ENCODE measurements at regions of chr1 and their contacts with region 1.

Region 1: GRCh38 chr1:201149400-201149799 is 4.9 kb downstream of the TMEM9 start:
- DNase-seq: peak; percentile 17
- ATAC-seq: no peak
- H3K4me3 Mint-ChIP-seq: no peak overlapping the region
- H3K27ac Mint-ChIP-seq: no peak overlapping the region
- H3K4me1 Mint-ChIP-seq: peaks cover 12% of the 10 kb centered on the region
- H3K27me3 Mint-ChIP-seq: no peaks in the 10 kb centered on the region
- CTCF ChIP-seq: peak; percentile 51

Region 2: DNA sequence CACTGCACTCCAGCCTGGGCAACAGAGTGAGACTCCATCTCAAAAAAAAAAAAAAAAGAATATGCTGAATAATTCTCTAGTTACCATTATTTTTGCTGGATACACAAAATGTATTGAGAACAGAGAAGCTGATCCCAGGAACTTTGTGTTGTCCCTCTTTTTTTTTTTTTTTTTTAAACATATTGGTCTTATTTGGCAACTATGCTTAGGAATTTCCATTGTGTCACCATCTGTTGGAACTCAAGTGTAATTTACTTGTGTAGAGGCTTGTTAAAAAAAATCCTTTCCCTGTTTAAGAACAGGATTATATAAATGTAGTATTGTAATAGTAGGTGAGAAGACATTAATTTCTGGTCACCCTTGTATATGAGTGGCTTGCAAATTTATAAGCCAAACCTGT is 382.1 kb before region 1 on chr1:
- CTCF ChIA-PET with region 1: no interaction called
- POLR2A ChIA-PET with region 1: no interaction called
- intact Hi-C with region 1: no loop called
- DNase-seq: no peak
- ATAC-seq: no peak
- H3K4me3 Mint-ChIP-seq: no peak overlapping the region
- H3K27ac Mint-ChIP-seq: no peak overlapping the region
- H3K4me1 Mint-ChIP-seq: no peaks in the 10 kb centered on the region
- H3K27me3 Mint-ChIP-seq: peaks cover 2% of the 10 kb centered on the region
- CTCF ChIP-seq: no peak

Region 3: DNA sequence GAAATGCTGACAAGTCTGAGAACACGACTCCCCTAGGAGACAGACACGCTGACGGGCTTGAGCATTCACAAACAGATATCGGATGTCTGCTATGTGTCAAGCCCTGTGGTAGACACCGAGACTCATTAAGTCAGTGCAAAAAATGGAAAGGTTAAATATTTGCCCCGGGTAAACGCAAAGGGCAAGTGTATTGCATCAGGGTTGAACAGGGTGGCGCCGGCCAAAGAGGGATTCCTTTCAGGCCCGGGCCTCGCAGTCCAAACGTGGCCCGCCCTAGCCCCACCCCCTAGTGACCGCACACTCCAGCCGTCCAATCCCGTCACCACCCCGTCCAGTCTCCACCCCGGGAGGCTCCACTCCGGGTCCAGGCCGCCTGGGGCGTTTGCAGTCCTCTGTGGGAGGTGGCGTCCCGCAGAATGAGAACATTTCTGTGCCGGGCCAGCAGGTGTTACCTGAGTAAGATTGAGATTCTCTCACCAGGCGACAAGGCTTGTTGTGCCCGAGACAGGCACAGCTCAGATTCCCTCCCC is 21.2 kb after region 1 on chr1:
- CTCF ChIA-PET with region 1: interaction called, 27 read pairs
- POLR2A ChIA-PET with region 1: interaction called, 24 read pairs
- intact Hi-C with region 1: no loop called
- DNase-seq: peak; percentile 92
- ATAC-seq: peak; percentile 90
- H3K4me3 Mint-ChIP-seq: peak overlapping the region; percentile 75
- H3K27ac Mint-ChIP-seq: peak overlapping the region; percentile 89
- H3K4me1 Mint-ChIP-seq: peaks cover 24% of the 10 kb centered on the region
- H3K27me3 Mint-ChIP-seq: peaks cover 7% of the 10 kb centered on the region
- CTCF ChIP-seq: no peak

Region 4: DNA sequence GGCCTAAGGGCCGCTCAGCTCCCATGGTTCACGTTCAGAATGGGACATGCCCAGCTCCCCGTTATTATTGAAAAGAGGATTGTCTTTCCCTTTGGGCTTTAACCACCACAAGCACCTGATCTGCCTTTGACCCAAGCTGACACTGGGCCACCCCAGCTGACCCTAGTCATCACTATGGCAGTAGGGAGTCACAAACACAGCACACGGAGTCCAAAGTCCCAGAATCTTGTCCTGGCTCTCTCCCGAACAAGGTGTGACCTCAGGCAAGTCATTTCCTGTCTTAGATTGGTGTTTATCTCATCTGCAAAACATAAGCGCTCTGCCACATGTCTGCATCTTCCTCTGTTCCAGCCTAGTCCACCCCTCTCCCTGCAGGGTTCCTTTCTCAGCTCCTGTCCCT is 72.7 kb after region 1 on chr1:
- CTCF ChIA-PET with region 1: interaction called, 14 read pairs
- POLR2A ChIA-PET with region 1: interaction called, 3 read pairs
- intact Hi-C with region 1: no loop called
- DNase-seq: no peak
- ATAC-seq: no peak
- H3K4me3 Mint-ChIP-seq: no peak overlapping the region
- H3K27ac Mint-ChIP-seq: no peak overlapping the region
- H3K4me1 Mint-ChIP-seq: no peaks in the 10 kb centered on the region
- H3K27me3 Mint-ChIP-seq: no peaks in the 10 kb centered on the region
- CTCF ChIP-seq: no peak

Measured in activated CD8-positive, alpha-beta T cell treated with anti-CD3 and anti-CD28 coated beads for 36 hours (primary cell).